ENCODE measurements at regions of chr2 and their contacts with region 1.

Region 1: GRCh38 chr2:24315669-24316068 is 44.7 kb downstream of the ITSN2 start:
- DNase-seq: no peak
- ATAC-seq: no peak
- H3K4me3 ChIP-seq: no peak overlapping the region
- H3K27ac ChIP-seq: no peak overlapping the region
- H3K4me1 ChIP-seq: peaks cover 19% of the 10 kb centered on the region
- H3K27me3 ChIP-seq: no peaks in the 10 kb centered on the region
- CTCF ChIP-seq: no peak

Region 2: GRCh38 chr2:24245986-24246776 is 69.5 kb before region 1 on chr2:
- intact Hi-C with region 1: no loop called
- DNase-seq: no peak
- ATAC-seq: no peak
- H3K4me3 ChIP-seq: no peak overlapping the region
- H3K27ac ChIP-seq: no peak overlapping the region
- H3K4me1 ChIP-seq: no peaks in the 10 kb centered on the region
- H3K27me3 ChIP-seq: no peaks in the 10 kb centered on the region
- CTCF ChIP-seq: no peak

Region 3: GRCh38 chr2:24351981-24352380 is 36.3 kb after region 1 on chr2:
- intact Hi-C with region 1: loop called in 1 of 2 experiments (anchors 5 kb)
- DNase-seq: no peak
- ATAC-seq: peak; percentile 53 to 84 (median 78)
- H3K4me3 ChIP-seq: no peak overlapping the region
- H3K27ac ChIP-seq: no peak overlapping the region
- H3K4me1 ChIP-seq: peaks cover 62% of the 10 kb centered on the region
- H3K27me3 ChIP-seq: no peaks in the 10 kb centered on the region
- CTCF ChIP-seq: peak; percentile 34